Natural killer cell (primary cell): ENCODE measurements at regions of chr7 and their contacts with region 1.

Region 1: DNA sequence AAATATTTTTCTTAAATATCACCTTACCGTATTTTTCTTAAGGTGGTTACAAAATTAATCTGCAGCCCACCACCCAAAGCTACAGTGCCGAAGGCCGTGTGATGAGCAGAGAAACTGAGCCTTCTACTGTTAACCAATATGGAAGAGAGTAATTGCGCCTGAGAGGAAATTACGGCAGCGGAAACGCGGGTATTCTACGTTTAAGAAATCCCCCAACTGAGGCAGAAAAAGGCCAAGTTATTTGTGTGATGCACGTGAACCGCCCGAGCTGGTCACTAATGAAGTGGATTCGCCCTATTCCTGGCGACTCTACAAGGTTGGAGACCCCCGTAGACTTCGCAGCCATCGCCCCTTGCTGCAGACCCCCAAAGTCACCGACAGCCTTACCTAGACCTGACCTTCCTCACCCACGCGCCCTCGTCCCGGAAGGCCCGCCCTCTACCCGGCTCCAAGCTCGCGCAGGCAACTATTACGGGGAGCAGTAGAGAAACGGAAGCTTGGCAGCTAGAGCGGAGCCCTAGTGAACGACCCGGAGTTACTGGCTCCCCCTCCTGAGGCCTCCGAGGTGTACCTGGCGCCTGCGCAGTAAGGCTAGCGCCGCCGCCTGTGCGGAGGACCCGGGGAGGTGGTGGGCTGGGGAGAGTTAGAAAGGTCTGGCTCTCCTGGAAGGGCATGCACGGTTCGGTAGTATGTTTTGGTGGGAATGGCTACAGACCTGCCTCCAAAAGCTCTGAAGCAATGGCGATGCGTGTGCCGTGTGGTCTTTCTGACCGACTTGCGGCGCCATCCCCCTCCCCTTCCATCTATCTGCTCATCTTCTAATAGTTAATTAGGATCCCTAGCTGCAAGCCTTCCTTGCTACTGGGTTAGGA is at the start of gene MRPS33:
- DNase-seq: peak; percentile 87 to 98
- ATAC-seq: peak; percentile 94 to 99 (median 95)
- H3K4me3 ChIP-seq: peak within 1 kb of the TSS; percentile 68
- H3K4me3 Mint-ChIP-seq: peak within 1 kb of the TSS; percentile 97
- H3K27ac ChIP-seq: peak within 1 kb of the TSS; percentile 96
- H3K27ac Mint-ChIP-seq: peak within 1 kb of the TSS; percentile 99 to 100
- H3K4me1 ChIP-seq: peaks cover 11% of the 10 kb centered on the region
- H3K4me1 Mint-ChIP-seq: peaks cover 42 to 44% of the 10 kb centered on the region in 2 donors
- H3K27me3 ChIP-seq: peaks cover 9% of the 10 kb centered on the region
- H3K27me3 Mint-ChIP-seq: peaks cover 18 to 29% of the 10 kb centered on the region in 2 donors
- CTCF ChIP-seq: peak; percentile 51
- total RNA-seq, gene MRPS33: 12.8 to 14.1 (median 13.7) TPM

Region 2: GRCh38 chr7:140517546-140518369 is 497.0 kb before region 1 on chr7:
- intact Hi-C with region 1: loop called (anchors 1 kb)
- DNase-seq: peak; percentile 34 to 75
- ATAC-seq: peak; percentile 44 to 72 (median 53)
- H3K4me3 ChIP-seq: no peak overlapping the region
- H3K4me3 Mint-ChIP-seq: no peak overlapping the region
- H3K27ac ChIP-seq: no peak overlapping the region
- H3K27ac Mint-ChIP-seq: no peak overlapping the region
- H3K4me1 ChIP-seq: peaks cover 3% of the 10 kb centered on the region
- H3K4me1 Mint-ChIP-seq: peaks cover 0 to 11% of the 10 kb centered on the region in 2 donors
- H3K27me3 ChIP-seq: no peaks in the 10 kb centered on the region
- H3K27me3 Mint-ChIP-seq: peaks cover 0 to 2% of the 10 kb centered on the region in 2 donors
- CTCF ChIP-seq: peak; percentile 50

Region 3: GRCh38 chr7:140719721-140720120 is 295.0 kb before region 1 on chr7:
- intact Hi-C with region 1: loop called (anchors 5 kb)
- DNase-seq: no peak
- ATAC-seq: no peak
- H3K4me3 ChIP-seq: no peak overlapping the region
- H3K4me3 Mint-ChIP-seq: no peak overlapping the region
- H3K27ac ChIP-seq: no peak overlapping the region
- H3K27ac Mint-ChIP-seq: peak overlapping the region in 1 of 2 donors; percentile 31
- H3K4me1 ChIP-seq: peaks cover 12% of the 10 kb centered on the region
- H3K4me1 Mint-ChIP-seq: peaks cover 36 to 51% of the 10 kb centered on the region in 2 donors
- H3K27me3 ChIP-seq: no peaks in the 10 kb centered on the region
- H3K27me3 Mint-ChIP-seq: no peaks in the 10 kb centered on the region
- CTCF ChIP-seq: no peak

Region 4: DNA sequence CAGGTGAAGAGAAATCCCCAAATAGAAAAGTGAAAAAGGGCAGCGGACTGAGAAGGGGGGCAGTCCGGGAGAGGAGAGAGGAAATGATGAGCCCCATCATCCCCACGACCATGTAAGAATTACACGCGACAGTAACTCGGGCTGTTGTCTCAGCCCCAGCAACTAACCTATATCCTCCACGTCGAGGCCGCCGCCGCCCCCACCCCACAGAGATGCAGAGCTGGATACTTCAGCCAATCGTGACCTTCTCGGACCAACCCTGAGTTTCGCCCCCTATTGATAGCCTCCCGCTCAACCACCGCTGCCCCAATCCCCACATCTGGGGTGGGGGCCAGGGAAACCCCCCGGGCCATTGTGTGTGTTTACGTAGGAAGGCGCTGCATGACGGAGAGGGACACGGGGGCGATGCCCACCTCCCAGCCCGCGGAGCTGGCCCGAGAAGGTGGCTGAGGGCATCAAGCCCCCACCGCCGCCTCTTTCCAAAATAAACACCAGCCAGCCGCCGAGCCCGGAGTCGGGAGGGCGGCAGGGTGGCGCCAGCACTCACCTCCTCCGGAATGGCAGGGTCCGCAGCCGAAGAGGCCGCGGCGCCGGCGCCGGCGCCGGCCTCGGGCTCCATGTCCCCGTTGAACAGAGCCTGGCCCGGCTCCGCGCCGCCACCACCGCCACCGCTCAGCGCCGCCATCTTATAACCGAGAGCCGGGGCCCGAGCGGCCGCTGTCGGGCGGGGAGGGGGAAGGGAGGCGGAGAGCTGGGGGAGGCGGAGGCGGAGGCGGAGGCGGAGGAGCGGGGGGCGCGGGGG is 90.5 kb before region 1 on chr7:
- intact Hi-C with region 1: loop called (anchors 1 kb)
- DNase-seq: peak; percentile 86 to 92
- ATAC-seq: peak; percentile 79 to 90 (median 79)
- H3K4me3 ChIP-seq: peak overlapping the region; percentile 71
- H3K4me3 Mint-ChIP-seq: no peak overlapping the region
- H3K27ac ChIP-seq: peak overlapping the region; percentile 94
- H3K27ac Mint-ChIP-seq: no peak overlapping the region
- H3K4me1 ChIP-seq: peaks cover 6% of the 10 kb centered on the region
- H3K4me1 Mint-ChIP-seq: peaks cover 16 to 17% of the 10 kb centered on the region in 2 donors
- H3K27me3 ChIP-seq: no peaks in the 10 kb centered on the region
- H3K27me3 Mint-ChIP-seq: peaks cover 2 to 4% of the 10 kb centered on the region in 2 donors
- CTCF ChIP-seq: no peak